ENCODE measurements at regions of chr14 and their contacts with region 1.

Region 1: GRCh38 chr14:67729072-67729885 is 27.6 kb downstream of the RDH12 start:
- DNase-seq: peak; percentile 51 to 77
- H3K4me3 ChIP-seq: peak overlapping the region in 3 of 4 experiments; percentile 13 to 37 (median 19); a peak in 4 of 8 replicates
- H3K27ac ChIP-seq: no peak overlapping the region
- H3K4me1 ChIP-seq: peaks cover 1 to 11% (median 6%) of the 10 kb centered on the region in 4 experiments; a peak in 5 of 7 replicates
- H3K27me3 ChIP-seq: no peaks in the 10 kb centered on the region; a peak in 1 of 7 replicates
- CTCF ChIP-seq: no peak
- EP300 ChIP-seq: no peak
- POLR2A ChIP-seq: peak in 1 of 2 experiments; percentile 66; a peak in 2 of 3 replicates
- RAD21 ChIP-seq: 0 out of 4 replicates have a peak, but pooled peaks of 1 of the 2 experiments have one; percentile 9

Region 2: GRCh38 chr14:67551940-67552339 is 177.3 kb before region 1 on chr14:
- CTCF ChIA-PET with region 1: no interaction called
- POLR2A ChIA-PET with region 1: no interaction called
- DNase-seq: no peak
- H3K4me3 ChIP-seq: no peak overlapping the region
- H3K27ac ChIP-seq: no peak overlapping the region
- H3K4me1 ChIP-seq: no peaks in the 10 kb centered on the region
- H3K27me3 ChIP-seq: no peaks in the 10 kb centered on the region
- CTCF ChIP-seq: no peak
- EP300 ChIP-seq: no peak
- POLR2A ChIP-seq: no peak
- RAD21 ChIP-seq: no peak

Region 3: GRCh38 chr14:67710209-67710608 is 19.1 kb before region 1 on chr14:
- CTCF ChIA-PET with region 1: interaction called, 11 read pairs
- POLR2A ChIA-PET with region 1: interaction called, 11 read pairs
- DNase-seq: no peak
- H3K4me3 ChIP-seq: no peak overlapping the region
- H3K27ac ChIP-seq: no peak overlapping the region
- H3K4me1 ChIP-seq: no peaks in the 10 kb centered on the region
- H3K27me3 ChIP-seq: no peaks in the 10 kb centered on the region
- CTCF ChIP-seq: no peak
- EP300 ChIP-seq: no peak
- POLR2A ChIP-seq: no peak
- RAD21 ChIP-seq: no peak

Region 4: DNA sequence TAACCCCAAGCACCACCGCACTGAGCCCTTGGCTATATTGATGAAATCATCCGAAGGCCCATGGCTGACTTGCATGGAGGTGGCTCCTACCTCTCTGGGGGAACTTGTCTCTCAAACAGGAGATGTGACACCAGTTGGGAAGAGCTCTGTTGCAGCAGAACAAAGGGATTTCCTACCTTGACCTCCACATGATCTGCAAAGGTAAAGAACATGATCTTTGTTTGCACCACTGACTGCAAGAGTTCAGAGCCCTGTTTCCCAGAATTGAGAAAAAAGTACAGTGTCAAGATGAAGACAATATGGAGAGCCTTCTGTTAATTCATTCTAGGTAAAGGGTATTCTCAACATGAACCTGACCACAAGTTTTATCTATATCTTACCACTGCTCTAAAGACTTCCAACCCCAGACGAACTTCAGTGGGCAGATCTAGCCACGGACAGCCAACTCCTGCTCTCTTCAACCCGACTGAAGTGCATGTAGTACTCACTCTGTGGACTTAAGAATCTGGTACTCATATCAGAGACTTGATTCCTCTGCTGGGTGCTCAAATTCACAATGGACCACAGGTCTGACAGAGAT is 55.1 kb after region 1 on chr14:
- CTCF ChIA-PET with region 1: no interaction called
- POLR2A ChIA-PET with region 1: no interaction called
- DNase-seq: no peak
- H3K4me3 ChIP-seq: no peak overlapping the region
- H3K27ac ChIP-seq: no peak overlapping the region
- H3K4me1 ChIP-seq: no peaks in the 10 kb centered on the region
- H3K27me3 ChIP-seq: no peaks in the 10 kb centered on the region
- CTCF ChIP-seq: no peak
- EP300 ChIP-seq: no peak
- POLR2A ChIP-seq: no peak
- RAD21 ChIP-seq: no peak

Region 5: GRCh38 chr14:67883717-67884116 is 154.4 kb after region 1 on chr14:
- CTCF ChIA-PET with region 1: no interaction called
- POLR2A ChIA-PET with region 1: no interaction called
- DNase-seq: no peak
- H3K4me3 ChIP-seq: no peak overlapping the region
- H3K27ac ChIP-seq: no peak overlapping the region
- H3K4me1 ChIP-seq: no peaks in the 10 kb centered on the region
- H3K27me3 ChIP-seq: no peaks in the 10 kb centered on the region
- CTCF ChIP-seq: no peak
- EP300 ChIP-seq: no peak
- POLR2A ChIP-seq: no peak
- RAD21 ChIP-seq: peak in 1 of 2 experiments; percentile 16; a peak in 1 of 4 replicates

Measured in H1 (cell line).